Testis (tissue), 5 donors: ENCODE measurements at regions of chr1 and their contacts with region 1.

Region 1: GRCh38 chr1:150561974-150562445 is 12.8 kb downstream of the ADAMTSL4 start:
- DNase-seq: peak; percentile 93
- H3K4me3 ChIP-seq: peak overlapping the region; percentile 27 to 59
- H3K27ac ChIP-seq: peak overlapping the region; percentile 97 to 99
- H3K4me1 ChIP-seq: peaks cover 71% of the 10 kb centered on the region
- H3K27me3 ChIP-seq: no peaks in the 10 kb centered on the region
- CTCF ChIP-seq: no peak
- POLR2A ChIP-seq: no peak

Region 2: DNA sequence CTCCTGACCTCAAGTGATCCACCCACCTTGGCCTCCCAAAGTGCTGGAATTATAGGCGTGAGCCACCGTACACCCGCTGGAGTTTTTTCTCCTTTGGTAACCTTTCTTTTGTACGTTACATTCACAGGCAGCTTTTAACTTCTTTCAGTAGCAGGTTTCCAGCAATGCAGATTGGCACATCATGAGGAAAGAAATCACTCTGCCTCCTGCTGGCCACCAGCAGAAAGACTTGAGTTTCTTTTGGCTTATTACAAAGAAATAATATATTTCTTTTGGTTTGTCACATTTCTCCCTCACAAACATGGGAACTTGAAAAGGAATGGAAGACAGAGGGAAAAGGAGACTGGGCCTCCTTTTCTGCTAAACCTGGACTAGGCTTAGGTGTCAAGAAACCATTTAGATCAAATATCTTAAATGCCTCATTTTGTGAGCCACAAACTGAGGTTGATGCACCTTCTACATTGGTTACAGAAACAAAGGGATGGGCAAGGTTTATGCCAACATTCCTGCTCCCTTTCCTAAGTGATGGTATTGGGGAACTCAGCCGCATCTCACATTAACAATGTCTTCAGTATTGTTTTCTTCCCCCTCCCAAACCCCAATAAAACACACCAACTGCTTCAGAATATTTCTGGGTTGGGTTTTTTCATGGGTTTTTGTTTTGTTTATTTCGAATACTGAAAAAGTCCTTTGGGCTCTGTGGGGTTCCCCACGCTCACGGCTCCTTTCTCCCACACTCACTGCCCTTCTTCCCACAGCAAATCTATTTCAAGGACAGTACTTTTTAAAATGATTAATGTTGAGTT is 59.7 kb after region 1 on chr1:
- intact Hi-C with region 1: loop called (anchors 5 kb)
- DNase-seq: peak; percentile 64
- H3K4me3 ChIP-seq: no peak overlapping the region
- H3K27ac ChIP-seq: peak overlapping the region; percentile 62 to 72
- H3K4me1 ChIP-seq: peaks cover 26% of the 10 kb centered on the region
- H3K27me3 ChIP-seq: no peaks in the 10 kb centered on the region
- CTCF ChIP-seq: peak; percentile 60 to 69 (median 61)
- POLR2A ChIP-seq: no peak

Region 3: GRCh38 chr1:150798525-150798924 is 236.5 kb after region 1 on chr1:
- intact Hi-C with region 1: no loop called
- DNase-seq: no peak
- H3K4me3 ChIP-seq: no peak overlapping the region
- H3K27ac ChIP-seq: no peak overlapping the region
- H3K4me1 ChIP-seq: no peaks in the 10 kb centered on the region
- H3K27me3 ChIP-seq: no peaks in the 10 kb centered on the region
- CTCF ChIP-seq: no peak
- POLR2A ChIP-seq: no peak

Region 4: DNA sequence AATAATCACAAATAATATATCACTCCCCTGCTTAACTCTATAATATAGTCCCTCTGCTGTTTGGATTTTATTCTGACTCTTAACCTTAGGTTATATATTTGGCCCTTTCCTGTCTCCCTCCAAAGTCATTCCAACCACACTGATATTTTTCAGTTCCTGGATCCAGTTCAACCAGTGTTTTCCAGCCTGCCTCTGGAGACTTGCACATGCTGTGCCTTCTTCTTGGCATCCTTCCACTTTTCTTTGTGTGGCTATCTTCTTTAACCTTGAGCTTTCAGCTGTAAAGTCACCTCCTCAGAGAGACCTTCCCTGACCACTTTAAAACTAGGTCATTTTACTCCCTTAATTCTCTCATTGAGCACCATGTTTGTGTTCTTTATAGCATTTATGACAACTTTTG is 393.3 kb after region 1 on chr1:
- intact Hi-C with region 1: no loop called
- DNase-seq: peak; percentile 46
- H3K4me3 ChIP-seq: no peak overlapping the region
- H3K27ac ChIP-seq: peak overlapping the region in 1 of 2 donors; percentile 4
- H3K4me1 ChIP-seq: no peaks in the 10 kb centered on the region
- H3K27me3 ChIP-seq: no peaks in the 10 kb centered on the region
- CTCF ChIP-seq: no peak
- POLR2A ChIP-seq: no peak